Caco-2 (cell line): ENCODE measurements at regions of chr20 and their contacts with region 1.

Region 1: GRCh38 chr20:56554869-56555268 is 21.8 kb downstream of the FAM209B start:
- DNase-seq: peak; percentile 35 to 55
- H3K4me3 ChIP-seq: no peak overlapping the region
- H3K4me3 Mint-ChIP-seq: no peak overlapping the region
- H3K27ac Mint-ChIP-seq: no peak overlapping the region
- H3K4me1 ChIP-seq: peaks cover 20% of the 10 kb centered on the region
- H3K4me1 Mint-ChIP-seq: peaks cover 21% of the 10 kb centered on the region
- H3K27me3 ChIP-seq: no peaks in the 10 kb centered on the region
- H3K27me3 Mint-ChIP-seq: no peaks in the 10 kb centered on the region
- CTCF ChIP-seq: no peak

Region 2: DNA sequence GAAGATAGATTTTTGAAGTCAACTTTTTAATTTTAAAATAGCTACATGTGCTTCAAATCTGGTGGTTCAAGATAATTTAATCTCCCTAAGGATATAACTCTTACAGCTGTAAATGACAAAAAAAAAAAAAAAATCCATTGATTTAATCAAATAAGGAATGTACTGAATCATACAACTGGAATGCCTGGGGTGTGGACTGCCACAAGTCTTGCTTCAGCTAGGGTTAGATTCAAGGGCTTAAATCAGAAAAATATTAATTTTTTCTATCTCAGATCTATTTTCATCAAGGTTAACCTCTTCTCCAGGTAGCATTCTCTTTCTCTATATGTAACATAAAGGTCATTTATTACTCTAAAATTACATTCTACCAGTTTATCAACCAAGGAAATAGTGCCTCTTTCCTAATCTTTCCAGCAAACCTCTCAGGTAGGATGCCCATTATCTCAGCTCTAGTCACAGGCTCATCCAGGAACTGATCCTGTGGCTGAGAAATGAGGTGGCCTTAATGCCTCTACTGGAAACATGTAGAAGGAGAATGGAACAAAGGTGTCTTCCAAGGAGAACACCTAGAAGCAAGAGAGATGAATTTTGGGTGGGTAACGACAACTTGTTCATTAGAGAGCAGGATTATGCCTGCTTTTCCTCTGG is 1016.5 kb before region 1 on chr20:
- CTCF ChIA-PET with region 1: no interaction called
- POLR2A ChIA-PET with region 1: no interaction called
- intact Hi-C with region 1: no loop called
- DNase-seq: no peak
- H3K4me3 ChIP-seq: no peak overlapping the region
- H3K4me3 Mint-ChIP-seq: no peak overlapping the region
- H3K27ac Mint-ChIP-seq: no peak overlapping the region
- H3K4me1 ChIP-seq: no peaks in the 10 kb centered on the region
- H3K4me1 Mint-ChIP-seq: no peaks in the 10 kb centered on the region
- H3K27me3 ChIP-seq: no peaks in the 10 kb centered on the region
- H3K27me3 Mint-ChIP-seq: peaks cover 9% of the 10 kb centered on the region
- CTCF ChIP-seq: no peak

Region 3: DNA sequence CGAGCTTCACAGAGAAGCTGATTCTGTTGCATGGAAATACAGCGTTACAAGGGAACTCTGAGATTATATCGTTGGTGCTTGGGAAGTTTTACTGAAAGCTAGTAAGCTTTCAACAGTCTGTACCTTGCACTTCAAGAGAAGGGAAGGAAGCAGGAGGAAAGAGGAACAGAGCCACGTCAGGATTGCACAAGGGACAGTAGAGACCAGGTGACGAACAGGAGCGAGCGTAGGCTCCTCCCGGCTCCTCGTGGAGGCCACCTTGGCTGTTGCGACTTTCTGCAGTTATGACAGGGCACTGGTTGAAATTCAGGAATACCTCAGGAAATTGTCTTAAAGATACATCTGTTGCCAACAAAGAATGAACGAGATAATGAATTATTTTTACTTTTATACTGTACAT is 67.7 kb before region 1 on chr20:
- CTCF ChIA-PET with region 1: no interaction called
- POLR2A ChIA-PET with region 1: no interaction called
- intact Hi-C with region 1: no loop called
- DNase-seq: no peak
- H3K4me3 ChIP-seq: no peak overlapping the region
- H3K4me3 Mint-ChIP-seq: no peak overlapping the region
- H3K27ac Mint-ChIP-seq: no peak overlapping the region
- H3K4me1 ChIP-seq: no peaks in the 10 kb centered on the region
- H3K4me1 Mint-ChIP-seq: no peaks in the 10 kb centered on the region
- H3K27me3 ChIP-seq: no peaks in the 10 kb centered on the region
- H3K27me3 Mint-ChIP-seq: no peaks in the 10 kb centered on the region
- CTCF ChIP-seq: no peak

Region 4: DNA sequence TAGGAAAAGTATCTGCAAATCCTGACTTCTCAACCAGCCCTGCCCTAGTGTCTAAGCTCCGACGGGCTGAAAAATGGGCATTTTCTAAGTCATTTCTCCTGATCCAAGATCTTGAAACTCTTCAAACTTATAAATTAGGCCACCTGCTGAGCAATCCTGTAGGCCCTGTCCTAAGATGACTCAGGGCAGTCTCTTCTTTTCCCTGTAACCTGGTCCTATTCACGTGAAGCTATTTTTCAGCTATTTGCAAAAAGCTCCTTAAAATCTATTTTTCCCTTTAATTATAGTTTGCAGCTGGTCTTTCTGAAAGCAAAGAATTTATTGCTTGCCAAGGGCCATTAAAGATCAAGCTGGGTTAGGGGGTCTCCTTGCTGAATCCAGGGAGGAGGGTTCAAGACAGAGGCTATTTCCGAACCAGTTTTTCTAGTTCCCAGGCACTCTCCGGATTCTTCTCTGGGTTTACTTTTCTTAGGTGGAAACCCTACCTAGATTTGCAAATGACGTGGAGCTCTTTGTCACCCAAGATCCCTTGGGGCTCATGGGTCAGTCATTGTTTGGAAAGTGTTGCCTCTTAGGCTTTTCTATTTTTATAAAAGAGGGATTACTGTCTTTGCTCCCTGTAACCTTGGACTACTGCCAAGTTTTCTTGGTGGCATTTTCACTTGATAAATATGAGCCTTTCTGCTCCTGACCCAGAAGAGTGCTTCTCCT is 11.6 kb after region 1 on chr20:
- CTCF ChIA-PET with region 1: interaction called, 12 read pairs
- POLR2A ChIA-PET with region 1: no interaction called
- intact Hi-C with region 1: no loop called
- DNase-seq: peak in 1 of 2 experiments; percentile 53
- H3K4me3 ChIP-seq: no peak overlapping the region
- H3K4me3 Mint-ChIP-seq: no peak overlapping the region
- H3K27ac Mint-ChIP-seq: peak overlapping the region; percentile 69
- H3K4me1 ChIP-seq: peaks cover 10% of the 10 kb centered on the region
- H3K4me1 Mint-ChIP-seq: peaks cover 11% of the 10 kb centered on the region
- H3K27me3 ChIP-seq: no peaks in the 10 kb centered on the region
- H3K27me3 Mint-ChIP-seq: no peaks in the 10 kb centered on the region
- CTCF ChIP-seq: no peak

Region 5: GRCh38 chr20:56595746-56596478 is 41.0 kb after region 1 on chr20:
- CTCF ChIA-PET with region 1: no interaction called
- POLR2A ChIA-PET with region 1: no interaction called
- intact Hi-C with region 1: no loop called
- DNase-seq: no peak
- H3K4me3 ChIP-seq: no peak overlapping the region
- H3K4me3 Mint-ChIP-seq: no peak overlapping the region
- H3K27ac Mint-ChIP-seq: no peak overlapping the region
- H3K4me1 ChIP-seq: peaks cover 38% of the 10 kb centered on the region
- H3K4me1 Mint-ChIP-seq: peaks cover 45% of the 10 kb centered on the region
- H3K27me3 ChIP-seq: no peaks in the 10 kb centered on the region
- H3K27me3 Mint-ChIP-seq: no peaks in the 10 kb centered on the region
- CTCF ChIP-seq: no peak

Region 6: GRCh38 chr20:56606174-56606884 is 51.5 kb after region 1 on chr20:
- CTCF ChIA-PET with region 1: interaction called, 3 read pairs
- POLR2A ChIA-PET with region 1: no interaction called
- intact Hi-C with region 1: loop called (anchors 2 kb)
- DNase-seq: peak; percentile 94 to 97
- H3K4me3 ChIP-seq: no peak overlapping the region
- H3K4me3 Mint-ChIP-seq: peak overlapping the region; percentile 45
- H3K27ac Mint-ChIP-seq: peak overlapping the region; percentile 94
- H3K4me1 ChIP-seq: peaks cover 63% of the 10 kb centered on the region
- H3K4me1 Mint-ChIP-seq: peaks cover 72% of the 10 kb centered on the region
- H3K27me3 ChIP-seq: no peaks in the 10 kb centered on the region
- H3K27me3 Mint-ChIP-seq: no peaks in the 10 kb centered on the region
- CTCF ChIP-seq: peak in 1 of 2 experiments; percentile 3

Region 7: GRCh38 chr20:56683080-56683847 is 128.4 kb after region 1 on chr20:
- CTCF ChIA-PET with region 1: interaction called, 3 read pairs
- POLR2A ChIA-PET with region 1: no interaction called
- intact Hi-C with region 1: loop called (anchors 1 kb)
- DNase-seq: no peak
- H3K4me3 ChIP-seq: no peak overlapping the region
- H3K4me3 Mint-ChIP-seq: no peak overlapping the region
- H3K27ac Mint-ChIP-seq: no peak overlapping the region
- H3K4me1 ChIP-seq: no peaks in the 10 kb centered on the region
- H3K4me1 Mint-ChIP-seq: peaks cover 11% of the 10 kb centered on the region
- H3K27me3 ChIP-seq: no peaks in the 10 kb centered on the region
- H3K27me3 Mint-ChIP-seq: no peaks in the 10 kb centered on the region
- CTCF ChIP-seq: peak in 1 of 2 experiments; percentile 10

Region 8: DNA sequence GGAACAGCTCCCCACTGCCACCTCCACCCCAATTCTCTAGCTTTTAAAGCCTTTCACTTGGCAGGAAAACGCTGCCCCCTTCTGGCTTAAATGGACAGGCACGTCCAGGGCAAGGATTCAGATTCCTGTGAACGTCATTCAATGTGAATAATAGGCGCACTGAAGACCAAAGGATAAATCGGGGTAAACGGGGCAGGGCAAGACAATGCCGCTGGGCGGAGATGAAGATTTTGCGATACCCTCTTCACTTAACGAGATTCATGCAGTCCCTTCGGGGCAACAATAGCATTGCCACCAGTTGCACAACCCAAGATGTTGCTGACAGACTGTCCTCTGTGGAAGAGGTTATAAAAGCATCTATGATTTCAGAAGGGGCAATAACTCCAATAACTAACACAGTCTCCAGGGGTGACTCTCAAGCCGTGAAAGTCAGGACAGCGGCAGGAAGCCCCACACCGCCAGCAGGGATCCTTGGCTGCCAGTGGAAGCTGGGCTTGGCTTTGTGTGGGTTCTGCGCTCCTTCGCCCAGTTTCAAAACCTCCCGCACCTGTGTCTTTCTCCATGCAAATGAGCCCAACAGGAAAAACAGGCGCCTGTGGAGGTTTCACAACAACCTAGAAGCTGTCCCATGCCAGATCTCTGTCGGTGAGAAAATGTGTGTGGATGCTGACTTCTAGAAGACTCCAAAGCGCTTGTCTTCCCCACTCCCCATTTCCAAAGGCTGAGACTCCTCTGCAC is 419.8 kb after region 1 on chr20:
- CTCF ChIA-PET with region 1: interaction called, 22 read pairs
- POLR2A ChIA-PET with region 1: no interaction called
- intact Hi-C with region 1: loop called (anchors 1 kb)
- DNase-seq: peak; percentile 76 to 81
- H3K4me3 ChIP-seq: no peak overlapping the region
- H3K4me3 Mint-ChIP-seq: no peak overlapping the region
- H3K27ac Mint-ChIP-seq: no peak overlapping the region
- H3K4me1 ChIP-seq: no peaks in the 10 kb centered on the region
- H3K4me1 Mint-ChIP-seq: no peaks in the 10 kb centered on the region
- H3K27me3 ChIP-seq: peaks cover 1% of the 10 kb centered on the region; the same call in 1 of the 2 replicates
- H3K27me3 Mint-ChIP-seq: peaks cover 21% of the 10 kb centered on the region
- CTCF ChIP-seq: peak; percentile 95 to 96

Region 9: GRCh38 chr20:57061058-57061900 is 506.4 kb after region 1 on chr20:
- CTCF ChIA-PET with region 1: interaction called, 12 read pairs
- POLR2A ChIA-PET with region 1: no interaction called
- intact Hi-C with region 1: loop called (anchors 1 kb)
- DNase-seq: peak; percentile 82 to 85
- H3K4me3 ChIP-seq: no peak overlapping the region
- H3K4me3 Mint-ChIP-seq: no peak overlapping the region
- H3K27ac Mint-ChIP-seq: no peak overlapping the region
- H3K4me1 ChIP-seq: no peaks in the 10 kb centered on the region
- H3K4me1 Mint-ChIP-seq: peaks cover 7% of the 10 kb centered on the region
- H3K27me3 ChIP-seq: no peaks in the 10 kb centered on the region
- H3K27me3 Mint-ChIP-seq: peaks cover 21% of the 10 kb centered on the region
- CTCF ChIP-seq: peak; percentile 90 to 93